PC-9 (cell line): ENCODE measurements at regions of chr4 and their contacts with region 1.

Region 1: GRCh38 chr4:6909073-6909965 is at the start of gene TBC1D14:
- DNase-seq: peak; percentile 67 to 83
- H3K4me3 ChIP-seq: peak within 1 kb of the TSS; percentile 78
- H3K27ac ChIP-seq: peak within 1 kb of the TSS; percentile 82
- H3K4me1 ChIP-seq: peaks cover 14% of the 10 kb centered on the region; the same call in 1 of the 2 replicates
- H3K27me3 ChIP-seq: no peaks in the 10 kb centered on the region
- CTCF ChIP-seq: no peak; the same call in 1 of the 2 replicates
- total RNA-seq, gene TBC1D14: 41.6 and 46.2 TPM in 2 replicates

Region 2: GRCh38 chr4:6869944-6870343 is 39.4 kb before region 1 on chr4:
- CTCF ChIA-PET with region 1: no interaction called
- POLR2A ChIA-PET with region 1: no interaction called
- intact Hi-C with region 1: no loop called
- DNase-seq: no peak
- H3K4me3 ChIP-seq: no peak overlapping the region
- H3K27ac ChIP-seq: no peak overlapping the region
- H3K4me1 ChIP-seq: no peaks in the 10 kb centered on the region
- H3K27me3 ChIP-seq: no peaks in the 10 kb centered on the region
- CTCF ChIP-seq: no peak

Region 3: GRCh38 chr4:6885951-6886557 is 23.3 kb before region 1 on chr4:
- CTCF ChIA-PET with region 1: no interaction called
- POLR2A ChIA-PET with region 1: interaction called, 10 read pairs
- intact Hi-C with region 1: no loop called
- DNase-seq: no peak
- H3K4me3 ChIP-seq: no peak overlapping the region
- H3K27ac ChIP-seq: no peak overlapping the region
- H3K4me1 ChIP-seq: no peaks in the 10 kb centered on the region
- H3K27me3 ChIP-seq: no peaks in the 10 kb centered on the region
- CTCF ChIP-seq: no peak

Region 4: DNA sequence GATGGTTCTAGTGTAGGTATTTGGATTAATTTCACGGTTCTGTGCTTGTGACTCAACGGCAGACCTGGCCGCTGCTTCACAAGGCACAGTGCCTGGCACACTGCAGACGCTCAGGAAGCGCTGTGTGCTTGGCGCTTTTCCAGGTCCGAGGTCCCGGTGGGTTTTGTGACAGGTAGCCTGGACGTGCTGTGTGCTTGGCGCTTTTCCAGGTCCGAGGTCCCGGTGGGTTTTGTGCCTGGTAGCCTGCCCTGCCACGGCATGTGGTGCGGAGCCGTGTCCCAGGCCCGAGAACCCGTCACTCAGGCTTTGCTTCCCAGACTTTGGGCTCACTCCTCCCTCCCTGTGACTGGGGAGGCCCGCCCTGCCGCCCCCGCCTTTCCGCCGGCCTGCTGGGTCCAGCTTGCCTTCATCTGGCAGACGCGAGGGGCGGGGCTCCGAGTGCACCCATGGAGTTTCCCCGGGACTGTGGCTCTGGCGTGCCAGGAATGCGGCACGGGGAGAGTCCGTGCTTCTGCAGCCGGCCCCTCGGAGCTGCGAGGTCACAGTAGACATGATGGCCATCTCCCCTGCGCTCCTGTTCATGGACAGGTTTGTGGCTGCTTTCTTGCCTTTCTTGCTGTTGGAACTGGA is 44.5 kb after region 1 on chr4:
- CTCF ChIA-PET with region 1: interaction called, 4 read pairs
- POLR2A ChIA-PET with region 1: interaction called, 6 read pairs
- intact Hi-C with region 1: loop called (anchors 2 kb)
- DNase-seq: peak in 1 of 2 experiments; percentile 77
- H3K4me3 ChIP-seq: no peak overlapping the region
- H3K27ac ChIP-seq: peak overlapping the region; percentile 95
- H3K4me1 ChIP-seq: peaks cover 28% of the 10 kb centered on the region
- H3K27me3 ChIP-seq: no peaks in the 10 kb centered on the region
- CTCF ChIP-seq: no peak

Region 5: GRCh38 chr4:6986781-6987587 is 77.7 kb after region 1 on chr4:
- CTCF ChIA-PET with region 1: no interaction called
- POLR2A ChIA-PET with region 1: no interaction called
- intact Hi-C with region 1: loop called (anchors 1 kb)
- DNase-seq: peak; percentile 79 to 96
- H3K4me3 ChIP-seq: peak overlapping the region; percentile 92
- H3K27ac ChIP-seq: peak overlapping the region; percentile 86
- H3K4me1 ChIP-seq: peaks cover 24% of the 10 kb centered on the region
- H3K27me3 ChIP-seq: no peaks in the 10 kb centered on the region
- CTCF ChIP-seq: no peak

Region 6: DNA sequence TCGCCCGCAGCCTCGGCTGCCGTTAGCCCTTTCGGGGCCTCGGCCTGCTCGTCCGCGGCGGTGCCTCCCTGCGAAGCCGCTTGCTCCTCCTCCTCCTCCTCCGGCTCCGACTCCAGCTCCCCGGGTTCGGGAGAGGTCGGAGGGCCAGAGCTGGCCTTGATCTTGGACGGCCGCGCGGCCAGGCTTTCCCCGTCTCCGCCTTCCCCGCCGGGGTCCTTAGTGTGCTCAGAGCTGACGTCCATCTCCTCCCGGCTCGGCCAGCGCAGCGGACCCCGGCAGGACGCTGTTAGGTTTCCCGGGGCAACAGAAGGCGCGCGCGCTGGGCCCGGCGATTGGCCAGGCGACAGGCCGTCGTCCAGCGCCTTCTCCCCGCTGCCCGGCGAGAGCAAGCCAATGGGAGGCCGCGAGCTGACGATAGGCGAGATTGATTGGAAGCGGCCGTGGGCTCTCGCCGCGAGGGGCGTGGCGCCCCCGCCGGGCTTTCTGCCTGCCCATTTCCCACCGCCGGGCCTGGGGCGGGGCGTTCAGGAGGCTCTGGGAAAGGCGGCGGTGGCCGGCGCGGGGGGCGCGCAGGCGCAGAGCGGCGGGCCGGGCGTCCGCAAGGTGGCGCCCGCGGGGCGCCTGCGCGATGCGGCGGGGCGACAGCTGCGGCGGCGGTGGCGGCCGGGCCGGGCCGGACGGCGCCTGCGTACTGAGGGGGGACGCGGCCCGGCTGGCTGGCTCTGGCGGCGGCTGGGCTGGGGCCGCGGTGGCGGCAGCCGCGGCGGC is 133.6 kb after region 1 on chr4 and contains the start of gene TADA2B:
- CTCF ChIA-PET with region 1: interaction called, 6 read pairs
- POLR2A ChIA-PET with region 1: no interaction called
- intact Hi-C with region 1: loop called (anchors 2 kb)
- DNase-seq: peak; percentile 87 to 98
- H3K4me3 ChIP-seq: peak within 1 kb of the TSS; percentile 86
- H3K27ac ChIP-seq: no peak within 1 kb of the TSS
- H3K4me1 ChIP-seq: 0 out of 2 replicates have a peak, but pooled peaks cover 16% of the 10 kb centered on the region
- H3K27me3 ChIP-seq: no peaks in the 10 kb centered on the region
- CTCF ChIP-seq: no peak
- total RNA-seq, gene TADA2B: 9.5 and 9.6 TPM in 2 replicates

Region 7: DNA sequence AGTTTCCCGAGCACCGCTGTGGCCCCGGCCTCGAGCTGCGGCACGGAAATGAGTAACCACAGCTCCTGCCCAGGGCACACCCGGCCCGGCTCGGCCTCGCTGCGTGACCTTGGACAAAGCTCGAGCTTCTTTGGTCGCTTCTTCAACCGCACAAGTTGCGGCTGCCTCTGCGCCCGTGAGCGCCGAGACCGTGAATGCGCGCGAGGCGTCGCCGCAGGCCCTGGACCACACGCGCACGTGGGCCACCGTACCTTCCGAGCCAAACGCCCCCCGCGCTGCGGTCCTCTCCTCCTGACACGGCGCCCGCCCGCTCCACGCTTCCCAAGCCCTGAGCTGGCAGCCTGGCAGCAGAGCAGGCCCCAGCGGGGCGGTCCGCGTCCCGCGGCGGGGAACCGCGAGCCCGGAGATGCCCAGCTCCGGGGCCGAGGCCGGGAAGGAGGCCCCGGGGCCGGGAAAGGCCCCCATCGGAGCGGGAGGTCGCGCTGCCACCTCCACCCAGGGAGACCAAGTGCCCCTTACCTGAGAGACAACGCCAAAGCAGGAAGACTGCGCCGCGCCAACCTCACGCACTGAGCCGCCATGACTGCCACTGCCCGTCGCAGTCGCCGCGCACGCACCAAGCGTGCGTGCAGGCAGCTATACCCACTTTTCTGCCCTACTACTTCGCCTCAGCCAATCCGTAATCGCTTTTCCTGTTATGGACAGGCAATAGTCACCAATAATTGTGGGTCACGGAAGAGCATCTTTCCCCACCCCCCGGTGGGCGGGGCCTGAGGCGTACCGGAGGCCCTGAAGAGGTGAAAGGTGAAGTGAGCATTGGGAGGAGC is 158.3 kb after region 1 on chr4 and contains the start of gene GRPEL1:
- CTCF ChIA-PET with region 1: interaction called, 4 read pairs
- POLR2A ChIA-PET with region 1: no interaction called
- intact Hi-C with region 1: loop called (anchors 2 kb)
- DNase-seq: peak; percentile 96 to 99
- H3K4me3 ChIP-seq: peak within 1 kb of the TSS; percentile 90
- H3K27ac ChIP-seq: peak within 1 kb of the TSS; percentile 63
- H3K4me1 ChIP-seq: peaks cover 13% of the 10 kb centered on the region
- H3K27me3 ChIP-seq: no peaks in the 10 kb centered on the region
- CTCF ChIP-seq: no peak
- total RNA-seq, gene GRPEL1: 49.3 and 49.9 TPM in 2 replicates